Activated CD8-positive, alpha-beta T cell treated with anti-CD3 and anti-CD28 coated beads for 36 hours (primary cell): ENCODE measurements at regions of chr13 and their contacts with region 1.

Region 1: DNA sequence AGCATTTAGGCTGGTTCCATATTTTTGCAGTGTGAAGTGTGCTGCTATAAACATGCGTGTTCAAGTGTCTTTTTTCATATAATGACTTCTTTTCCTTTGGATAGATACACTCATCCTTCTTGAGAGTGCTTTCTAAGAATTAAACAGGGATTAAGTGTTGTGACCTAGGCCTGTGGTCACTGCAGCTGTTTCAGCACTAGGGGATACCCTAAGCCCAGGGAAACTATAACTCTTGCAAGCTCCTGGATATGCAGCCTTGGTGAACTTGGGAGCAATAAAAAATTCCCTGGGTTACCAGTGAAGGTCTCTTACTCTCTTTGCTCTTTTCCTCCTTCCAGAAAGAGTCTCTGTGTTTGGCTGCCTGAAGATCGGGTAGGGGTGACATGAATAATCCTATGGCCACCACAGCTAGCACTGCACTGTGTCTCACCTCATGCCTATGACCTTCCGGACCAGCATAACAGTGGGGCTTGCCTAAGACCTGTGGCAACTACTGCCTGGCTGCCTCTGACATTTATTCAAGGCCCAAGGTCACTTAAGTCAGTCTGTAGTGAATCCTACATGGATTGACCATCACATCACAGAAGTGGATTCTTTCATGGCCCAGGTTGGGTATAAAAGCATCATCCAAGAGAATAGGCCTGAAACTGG is 799.7 kb downstream of the DACH1 start:
- DNase-seq: no peak
- ATAC-seq: no peak
- H3K4me3 Mint-ChIP-seq: no peak overlapping the region
- H3K27ac Mint-ChIP-seq: no peak overlapping the region
- H3K4me1 Mint-ChIP-seq: no peaks in the 10 kb centered on the region
- H3K27me3 Mint-ChIP-seq: no peaks in the 10 kb centered on the region
- CTCF ChIP-seq: no peak

Region 2: GRCh38 chr13:71021825-71022422 is 45.4 kb before region 1 on chr13:
- CTCF ChIA-PET with region 1: no interaction called
- POLR2A ChIA-PET with region 1: no interaction called
- intact Hi-C with region 1: no loop called
- DNase-seq: no peak
- ATAC-seq: no peak
- H3K4me3 Mint-ChIP-seq: no peak overlapping the region
- H3K27ac Mint-ChIP-seq: no peak overlapping the region
- H3K4me1 Mint-ChIP-seq: no peaks in the 10 kb centered on the region
- H3K27me3 Mint-ChIP-seq: no peaks in the 10 kb centered on the region
- CTCF ChIP-seq: no peak

Region 3: DNA sequence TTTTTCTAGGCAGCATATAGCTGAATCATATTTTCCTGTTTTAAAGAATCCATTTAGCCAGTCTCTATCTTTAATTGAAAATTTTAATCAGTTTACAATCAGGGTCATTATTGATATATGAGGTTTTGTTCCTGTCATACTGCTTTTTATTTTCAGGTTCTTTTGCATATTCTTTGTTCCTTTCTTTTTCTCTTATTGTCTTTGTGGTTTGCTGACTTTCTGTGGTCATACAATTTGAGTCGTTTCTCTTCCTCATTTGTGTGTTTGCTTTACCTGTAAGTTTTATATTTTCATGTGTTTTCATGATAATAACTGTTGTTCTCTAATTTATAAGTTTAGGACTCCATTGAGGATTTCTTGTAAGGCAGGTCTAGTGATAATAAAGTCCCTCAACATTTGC is 12.9 kb before region 1 on chr13:
- CTCF ChIA-PET with region 1: no interaction called
- POLR2A ChIA-PET with region 1: no interaction called
- intact Hi-C with region 1: no loop called
- DNase-seq: no peak
- ATAC-seq: no peak
- H3K4me3 Mint-ChIP-seq: no peak overlapping the region
- H3K27ac Mint-ChIP-seq: no peak overlapping the region
- H3K4me1 Mint-ChIP-seq: no peaks in the 10 kb centered on the region
- H3K27me3 Mint-ChIP-seq: no peaks in the 10 kb centered on the region
- CTCF ChIP-seq: no peak

Region 4: GRCh38 chr13:71477735-71478134 is 410.4 kb after region 1 on chr13:
- CTCF ChIA-PET with region 1: no interaction called
- POLR2A ChIA-PET with region 1: no interaction called
- intact Hi-C with region 1: loop called (anchors 10 kb)
- DNase-seq: no peak
- ATAC-seq: no peak
- H3K4me3 Mint-ChIP-seq: no peak overlapping the region
- H3K27ac Mint-ChIP-seq: no peak overlapping the region
- H3K4me1 Mint-ChIP-seq: no peaks in the 10 kb centered on the region
- H3K27me3 Mint-ChIP-seq: no peaks in the 10 kb centered on the region
- CTCF ChIP-seq: peak; percentile 45